A549 (cell line): ENCODE measurements at regions of chr17 and their contacts with region 1.

Region 1: GRCh38 chr17:77120868-77121267 is 19.9 kb upstream of the SEC14L1 start:
- DNase-seq: no peak
- ATAC-seq: no peak
- H3K4me3 ChIP-seq: no peak overlapping the region
- H3K27ac ChIP-seq: peak overlapping the region; percentile 70 to 81
- H3K4me1 ChIP-seq: peaks cover 50% of the 10 kb centered on the region
- CTCF ChIP-seq: no peak
- EP300 ChIP-seq: no peak
- POLR2A ChIP-seq: no peak
- RAD21 ChIP-seq: no peak

Region 2: GRCh38 chr17:77072670-77073069 is 48.2 kb before region 1 on chr17:
- CTCF ChIA-PET with region 1: no interaction called
- POLR2A ChIA-PET with region 1: no interaction called
- DNase-seq: no peak
- ATAC-seq: no peak
- H3K4me3 ChIP-seq: no peak overlapping the region
- H3K27ac ChIP-seq: no peak overlapping the region
- H3K4me1 ChIP-seq: no peaks in the 10 kb centered on the region
- CTCF ChIP-seq: no peak
- EP300 ChIP-seq: no peak
- POLR2A ChIP-seq: no peak
- RAD21 ChIP-seq: no peak

Region 3: DNA sequence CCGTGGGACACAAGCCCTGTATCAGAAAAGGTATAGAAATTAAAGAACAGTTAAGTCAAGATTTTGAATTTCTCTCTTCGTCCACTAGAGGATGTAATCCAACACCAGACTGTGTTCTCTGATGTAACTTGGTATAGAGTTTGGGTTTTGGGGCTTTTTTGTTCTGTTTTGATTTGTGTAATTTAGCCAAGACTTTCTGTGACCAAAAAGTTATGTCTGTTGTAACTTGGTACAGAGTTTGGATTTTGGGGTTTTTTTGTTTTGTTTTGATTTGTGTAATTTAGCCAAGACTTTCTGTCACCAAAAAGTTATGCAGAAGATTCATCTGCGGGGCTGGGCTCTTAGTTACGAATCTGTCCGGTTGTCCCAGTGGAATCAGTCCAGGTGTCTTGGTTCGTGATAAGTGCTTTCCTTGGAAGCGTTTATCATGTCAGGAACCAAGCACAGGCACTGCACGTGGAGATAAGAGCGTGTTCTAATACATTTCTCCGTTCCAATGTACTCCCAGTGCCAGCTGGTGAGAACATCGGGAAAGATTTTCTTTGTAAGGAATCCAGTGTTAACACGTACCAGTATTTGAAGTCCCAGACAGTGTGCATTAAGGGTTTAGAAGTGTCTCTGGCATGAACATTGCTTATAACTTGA is 24.2 kb before region 1 on chr17:
- CTCF ChIA-PET with region 1: interaction called, 13 read pairs
- POLR2A ChIA-PET with region 1: interaction called, 4 read pairs
- DNase-seq: peak; percentile 51 to 65
- ATAC-seq: peak; percentile 70 to 73; a peak in 5 of 6 replicates
- H3K4me3 ChIP-seq: no peak overlapping the region
- H3K27ac ChIP-seq: peak overlapping the region in 1 of 2 experiments; percentile 41; a peak in 1 of 6 replicates
- H3K4me1 ChIP-seq: peaks cover 15% of the 10 kb centered on the region
- CTCF ChIP-seq: peak; percentile 88
- EP300 ChIP-seq: no peak
- POLR2A ChIP-seq: no peak
- RAD21 ChIP-seq: peak; percentile 84 to 86

Region 4: GRCh38 chr17:77140166-77140878 is 19.5 kb after region 1 on chr17:
- CTCF ChIA-PET with region 1: interaction called, 11 read pairs
- POLR2A ChIA-PET with region 1: interaction called, 22 read pairs
- DNase-seq: peak; percentile 91 to 99
- ATAC-seq: peak; percentile 91 to 95
- H3K4me3 ChIP-seq: peak overlapping the region; percentile 90
- H3K27ac ChIP-seq: peak overlapping the region; percentile 95 to 96
- H3K4me1 ChIP-seq: peaks cover 13% of the 10 kb centered on the region
- CTCF ChIP-seq: no peak
- EP300 ChIP-seq: no peak
- POLR2A ChIP-seq: peak; percentile 88
- RAD21 ChIP-seq: peak in 1 of 2 experiments; percentile 25; a peak in 2 of 5 replicates